ENCODE measurements at regions of chr19 and their contacts with region 1.

Region 1: GRCh38 chr19:35509861-35510625 is 3.4 kb downstream of the DMKN start:
- DNase-seq: peak; percentile 73 to 99
- ATAC-seq: peak; percentile 68 to 90
- H3K4me3 ChIP-seq: peak overlapping the region; percentile 48
- H3K27ac ChIP-seq: peak overlapping the region; percentile 57 to 80
- H3K4me1 ChIP-seq: peaks cover 16% of the 10 kb centered on the region
- CTCF ChIP-seq: peak; percentile 100
- EP300 ChIP-seq: no peak
- POLR2A ChIP-seq: no peak; the same call in 1 of the 2 replicates
- RAD21 ChIP-seq: peak; percentile 70 to 81

Region 2: DNA sequence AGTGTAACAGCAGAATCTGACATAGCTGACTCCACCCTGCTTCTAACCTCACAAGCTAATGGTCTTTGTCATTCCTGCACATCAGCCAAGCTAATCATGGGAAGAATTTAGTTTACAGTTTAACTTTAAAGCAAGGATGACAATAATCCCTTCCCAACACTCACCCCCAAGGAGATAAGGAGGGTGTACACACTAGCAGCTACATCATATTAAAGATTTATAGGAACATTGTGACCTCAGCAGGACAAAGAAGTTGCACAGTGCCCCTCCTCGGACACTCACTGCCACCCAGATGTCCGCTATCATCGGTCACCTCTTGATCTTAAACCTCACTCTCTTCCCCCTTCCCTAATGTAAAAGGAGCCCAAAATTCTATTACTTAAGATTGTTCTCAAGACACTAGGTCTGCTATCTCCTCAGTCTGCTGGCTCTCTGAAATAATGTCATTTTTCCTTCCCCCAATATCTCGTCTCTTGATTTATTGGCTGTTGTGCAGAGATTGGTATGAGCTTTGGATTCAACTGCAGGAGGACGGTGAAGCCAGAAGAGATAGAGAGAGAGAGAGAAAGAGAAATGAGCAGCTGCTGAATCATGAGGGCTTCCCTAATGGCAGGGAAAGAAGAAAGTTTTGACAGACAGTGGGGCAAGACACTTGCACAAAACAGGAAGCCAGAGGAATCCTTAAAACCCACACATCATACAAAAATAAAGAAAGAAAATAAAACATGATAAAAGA is 79.5 kb before region 1 on chr19:
- CTCF ChIA-PET with region 1: interaction called, 12 read pairs
- POLR2A ChIA-PET with region 1: no interaction called
- DNase-seq: no peak
- ATAC-seq: no peak
- H3K4me3 ChIP-seq: no peak overlapping the region
- H3K27ac ChIP-seq: no peak overlapping the region
- H3K4me1 ChIP-seq: no peaks in the 10 kb centered on the region
- CTCF ChIP-seq: no peak
- EP300 ChIP-seq: no peak
- POLR2A ChIP-seq: no peak
- RAD21 ChIP-seq: no peak

Region 3: DNA sequence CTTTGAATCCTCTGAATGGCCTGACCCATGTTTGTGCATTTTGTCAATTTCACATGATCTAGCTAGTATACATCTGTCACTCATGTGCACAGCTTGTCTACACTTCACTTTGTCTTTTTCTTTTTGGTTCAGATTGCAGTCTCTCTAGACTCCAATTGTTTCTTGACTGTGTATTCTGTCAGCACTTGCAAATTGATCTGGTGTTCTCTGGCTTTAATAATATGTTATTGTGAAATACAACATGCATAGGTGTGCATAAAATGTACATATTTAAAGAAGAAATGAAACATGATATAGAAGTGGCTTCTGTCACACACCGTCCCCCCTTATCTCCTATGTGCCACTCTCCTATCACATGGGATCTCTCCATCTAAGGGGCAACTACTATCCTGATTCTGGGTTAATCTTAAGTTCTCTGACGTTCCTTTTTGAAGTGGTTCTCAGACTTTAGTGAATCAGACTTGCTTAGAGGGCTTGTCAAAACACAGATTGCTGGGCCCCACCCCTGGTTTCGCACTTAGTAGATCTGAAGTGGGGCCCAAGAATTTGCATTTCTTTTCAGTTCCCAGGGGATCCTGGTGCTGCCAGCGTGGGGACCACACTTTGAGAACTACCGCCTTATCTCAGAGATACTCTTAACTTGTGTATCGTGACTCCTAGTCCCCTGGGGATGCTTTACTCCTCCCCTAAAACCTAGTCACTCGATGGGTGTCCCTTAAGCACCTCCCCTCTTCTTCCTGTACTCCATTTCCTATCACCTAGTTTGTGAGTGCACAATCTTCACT is 25.6 kb before region 1 on chr19:
- CTCF ChIA-PET with region 1: interaction called, 27 read pairs
- POLR2A ChIA-PET with region 1: no interaction called
- DNase-seq: no peak
- ATAC-seq: no peak
- H3K4me3 ChIP-seq: no peak overlapping the region
- H3K27ac ChIP-seq: no peak overlapping the region
- H3K4me1 ChIP-seq: no peaks in the 10 kb centered on the region
- CTCF ChIP-seq: no peak
- EP300 ChIP-seq: no peak
- POLR2A ChIP-seq: no peak
- RAD21 ChIP-seq: no peak

Region 4: DNA sequence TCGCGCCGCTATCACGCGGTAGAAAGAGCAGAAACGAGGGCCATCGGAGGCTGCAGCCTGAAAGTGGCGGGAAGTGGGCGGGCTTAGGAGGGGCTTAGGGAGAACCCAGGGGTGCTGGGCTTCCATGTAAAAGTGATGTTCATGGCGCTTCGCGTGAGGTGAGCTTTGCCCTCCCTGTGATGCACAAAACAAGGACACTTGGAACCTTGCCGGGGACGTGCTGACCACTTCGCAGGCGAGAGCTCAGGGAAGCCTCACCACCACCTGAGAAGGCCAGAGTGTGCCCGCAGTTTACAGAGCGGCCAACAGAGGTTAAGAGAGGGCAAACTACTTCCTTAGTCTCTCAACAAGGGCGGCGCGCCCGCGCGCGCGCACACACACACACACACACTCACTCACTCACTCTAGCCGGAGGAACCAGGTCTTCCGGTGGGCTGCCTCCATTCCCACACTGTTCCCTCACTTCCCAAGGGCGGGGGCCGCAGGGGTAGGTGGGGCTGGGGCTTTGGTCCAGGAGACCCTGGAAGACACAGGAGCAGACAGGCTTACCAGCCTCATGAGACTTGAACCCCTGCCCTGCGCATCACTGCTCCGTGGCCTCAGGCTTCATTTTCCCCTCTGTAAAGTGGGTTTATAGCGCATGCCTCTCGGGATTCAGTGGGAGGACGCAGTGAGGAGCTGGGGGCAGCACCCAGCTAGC is 23.9 kb after region 1 on chr19:
- CTCF ChIA-PET with region 1: interaction called, 52 read pairs
- POLR2A ChIA-PET with region 1: interaction called, 9 read pairs
- DNase-seq: peak in 1 of 2 experiments; percentile 73
- ATAC-seq: peak; percentile 66 to 76
- H3K4me3 ChIP-seq: no peak overlapping the region
- H3K27ac ChIP-seq: 0 out of 6 replicates have a peak overlapping the region, but pooled peaks of 1 of the 2 experiments have one; percentile 4
- H3K4me1 ChIP-seq: peaks cover 11% of the 10 kb centered on the region
- CTCF ChIP-seq: no peak
- EP300 ChIP-seq: no peak
- POLR2A ChIP-seq: no peak
- RAD21 ChIP-seq: no peak

Region 5: DNA sequence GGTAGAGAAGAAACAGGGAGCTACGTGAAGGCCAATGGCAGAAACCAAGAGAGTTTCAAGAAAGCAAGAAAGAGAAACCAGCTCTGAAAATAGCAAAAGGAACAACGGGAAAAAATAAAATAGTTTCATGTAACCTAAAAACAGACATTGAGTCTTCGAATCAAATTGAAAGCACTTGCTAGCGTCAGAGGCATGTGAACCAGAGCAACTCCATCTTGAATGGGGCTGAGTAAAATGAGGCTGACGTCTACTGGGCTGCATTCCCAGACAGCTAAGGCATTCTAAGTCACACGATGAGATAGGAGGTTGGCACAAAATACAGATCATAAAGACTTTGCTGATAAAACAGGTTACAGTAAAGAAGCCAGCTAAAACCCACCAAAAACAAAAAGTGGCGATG is 68.7 kb after region 1 on chr19:
- CTCF ChIA-PET with region 1: interaction called, 14 read pairs
- POLR2A ChIA-PET with region 1: no interaction called
- DNase-seq: no peak
- ATAC-seq: no peak
- H3K4me3 ChIP-seq: no peak overlapping the region
- H3K27ac ChIP-seq: no peak overlapping the region
- H3K4me1 ChIP-seq: no peaks in the 10 kb centered on the region
- CTCF ChIP-seq: no peak
- EP300 ChIP-seq: no peak
- POLR2A ChIP-seq: no peak
- RAD21 ChIP-seq: no peak

Region 6: DNA sequence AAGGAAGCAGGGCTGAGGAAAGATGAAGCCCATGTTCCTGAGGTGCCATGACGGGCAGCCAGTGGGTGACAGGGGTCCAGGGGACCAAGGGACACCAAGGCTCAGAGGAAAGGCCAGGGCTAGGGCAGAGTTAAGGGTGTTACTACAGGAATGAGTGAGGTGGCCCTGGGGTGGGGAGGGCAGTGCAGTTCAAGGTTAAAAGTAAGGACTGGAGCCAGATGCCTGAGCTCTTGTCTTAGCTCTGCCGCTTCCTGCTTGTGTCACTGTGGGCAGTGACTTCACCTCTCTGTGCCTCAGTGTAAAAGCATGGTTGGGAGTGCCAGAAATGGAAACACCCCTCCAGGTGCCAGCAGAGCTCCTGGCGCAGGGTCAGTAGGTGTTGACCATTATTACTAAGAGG is 126.6 kb after region 1 on chr19:
- CTCF ChIA-PET with region 1: interaction called, 10 read pairs
- POLR2A ChIA-PET with region 1: no interaction called
- DNase-seq: no peak
- ATAC-seq: no peak
- H3K4me3 ChIP-seq: no peak overlapping the region
- H3K27ac ChIP-seq: no peak overlapping the region
- H3K4me1 ChIP-seq: no peaks in the 10 kb centered on the region
- CTCF ChIP-seq: no peak
- EP300 ChIP-seq: no peak
- POLR2A ChIP-seq: no peak; the same call in 1 of the 2 replicates
- RAD21 ChIP-seq: no peak

Measured in A549 (cell line).